ENCODE measurements at regions of chr4 and their contacts with region 1.

Region 1: GRCh38 chr4:184263910-184264732 is 46.4 kb upstream of the ENPP6 start:
- DNase-seq: peak; percentile 89 to 99 (median 96)

Region 2: GRCh38 chr4:184250795-184251669 is 13.1 kb before region 1 on chr4:
- intact Hi-C with region 1: no loop called
- DNase-seq: peak in 1 of 42 donors; percentile 52

Region 3: GRCh38 chr4:184395971-184396391 is 131.9 kb after region 1 on chr4:
- intact Hi-C with region 1: loop called (anchors 10 kb)
- DNase-seq: no peak

Region 4: GRCh38 chr4:184474263-184475095 is 210.4 kb after region 1 on chr4 and contains the start of gene IRF2:
- intact Hi-C with region 1: loop called (anchors 5 kb)
- DNase-seq: peak; percentile 87 to 99 (median 96)

Region 5: GRCh38 chr4:184538023-184538599 is 274.0 kb after region 1 on chr4:
- intact Hi-C with region 1: loop called (anchors 2 kb)
- DNase-seq: peak; percentile 68 to 95 (median 88)

Region 6: DNA sequence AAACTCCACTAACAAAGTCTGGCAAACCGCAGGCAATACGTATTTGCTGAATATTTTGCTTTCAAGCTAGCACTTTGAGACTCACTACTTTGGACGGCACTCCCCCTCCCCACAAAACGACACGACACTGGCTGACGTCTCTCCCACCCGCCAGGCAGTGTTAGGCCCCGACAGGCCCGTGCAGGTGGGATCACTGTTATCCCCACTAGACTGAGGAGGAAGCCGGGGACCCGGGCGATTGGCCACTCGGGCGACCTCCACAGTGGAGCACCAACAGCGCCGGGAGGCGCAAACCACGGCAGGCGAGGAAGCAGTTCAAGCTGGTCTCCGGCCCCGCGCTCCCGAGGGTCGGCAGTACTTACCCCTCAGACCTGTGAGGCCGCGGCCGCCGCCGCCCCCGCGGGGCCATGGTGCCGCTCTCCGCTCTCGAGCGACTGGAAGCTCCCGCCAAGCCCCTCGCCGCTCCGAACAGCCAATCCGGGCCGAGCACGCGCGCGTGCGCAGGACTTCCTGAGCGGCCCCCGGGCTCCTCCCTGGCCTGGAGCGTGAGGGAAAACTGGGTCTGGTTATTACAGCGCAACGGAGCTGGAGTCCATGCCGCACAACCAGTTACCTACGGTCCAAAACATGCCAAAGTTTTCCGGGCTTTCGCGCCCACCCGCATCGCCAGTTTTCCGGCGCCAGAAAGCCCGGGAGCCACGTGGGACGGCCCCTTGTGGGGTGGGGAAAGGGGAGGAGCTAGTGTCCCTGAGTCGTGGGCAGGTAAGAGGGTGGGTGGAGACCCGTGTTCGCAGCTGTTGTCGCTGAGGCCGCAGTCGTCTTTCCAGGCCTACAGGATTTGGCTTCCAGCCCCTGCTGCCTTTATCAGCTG is 469.8 kb after region 1 on chr4 and contains the start of gene CENPU:
- intact Hi-C with region 1: loop called (anchors 10 kb)
- DNase-seq: peak; percentile 91 to 98 (median 97)

Measured in head of caudate nucleus (tissue), 42 donors.